ENCODE measurements at regions of chr10 and their contacts with region 1.

Region 1: DNA sequence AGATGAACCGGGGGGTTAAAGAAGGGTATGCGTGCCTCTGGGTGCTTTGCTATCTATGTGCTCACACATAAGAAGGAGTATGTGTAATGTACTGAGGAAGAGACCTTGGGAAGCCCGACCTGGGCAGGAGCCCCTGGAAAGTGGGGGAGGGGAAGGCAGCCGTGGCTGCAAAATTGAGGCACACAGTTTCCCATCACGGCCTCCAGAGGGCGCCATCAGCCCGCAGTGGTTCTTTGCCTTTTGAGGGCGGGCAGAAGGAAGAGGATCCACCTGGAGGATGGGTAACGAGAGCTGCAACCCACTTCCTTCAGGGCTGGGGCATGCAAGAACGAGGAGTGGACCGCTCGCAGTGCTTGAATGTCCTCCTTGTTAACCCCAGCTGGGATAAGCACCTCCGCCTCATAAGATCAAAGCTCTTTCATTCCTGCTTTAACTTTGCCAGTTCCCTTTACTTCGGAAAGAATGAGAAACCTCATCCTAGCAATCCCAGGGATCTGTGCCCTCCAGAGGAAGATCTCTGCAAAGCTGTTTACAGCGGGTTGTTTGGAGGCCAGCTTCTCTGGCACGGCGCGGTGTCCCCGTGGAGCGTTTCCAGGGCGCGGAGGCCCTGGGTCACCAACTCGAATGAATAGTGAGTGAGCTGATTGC is 77.9 kb downstream of the PCGF5 start:
- DNase-seq: peak; percentile 40 to 72
- H3K4me3 ChIP-seq: peak overlapping the region; percentile 24; the same call in 1 of the 2 replicates
- H3K27ac ChIP-seq: no peak overlapping the region
- H3K4me1 ChIP-seq: 0 out of 2 replicates have a peak, but pooled peaks cover 7% of the 10 kb centered on the region
- H3K27me3 ChIP-seq: no peaks in the 10 kb centered on the region
- CTCF ChIP-seq: peak; percentile 83

Region 2: DNA sequence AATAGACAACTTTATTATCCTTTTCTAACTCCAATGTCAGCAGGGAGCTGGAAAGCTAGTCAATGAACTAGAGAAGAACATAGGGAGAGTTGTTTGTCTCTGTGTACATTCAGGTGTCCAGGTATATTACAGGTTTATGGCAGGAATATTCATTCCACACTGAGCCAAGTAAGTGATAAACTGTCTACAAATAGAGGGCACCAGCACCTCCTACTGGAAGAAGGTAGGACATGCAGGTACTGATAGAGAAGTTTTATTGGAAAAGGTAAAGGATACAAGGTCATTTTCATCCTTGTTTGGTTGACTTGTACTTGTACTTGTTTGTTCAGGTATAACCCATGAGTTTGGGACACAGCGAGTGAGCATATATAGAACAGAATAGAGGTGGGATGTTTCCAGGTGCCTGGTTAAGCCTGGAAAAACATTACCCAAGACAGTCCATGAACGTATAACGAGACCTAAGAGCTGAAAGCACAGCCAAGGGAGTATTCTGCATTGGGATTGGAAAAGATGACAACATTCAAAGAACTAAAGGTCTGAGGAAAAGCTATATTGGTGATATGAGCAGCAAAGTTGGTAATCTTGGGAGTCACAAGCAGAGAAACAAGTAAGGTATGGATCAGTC is 395.9 kb after region 1 on chr10:
- CTCF ChIA-PET with region 1: no interaction called
- POLR2A ChIA-PET with region 1: no interaction called
- intact Hi-C with region 1: loop called (anchors 1 kb)
- DNase-seq: no peak
- H3K4me3 ChIP-seq: no peak overlapping the region
- H3K27ac ChIP-seq: no peak overlapping the region
- H3K4me1 ChIP-seq: no peaks in the 10 kb centered on the region
- H3K27me3 ChIP-seq: no peaks in the 10 kb centered on the region
- CTCF ChIP-seq: peak; percentile 73

Region 3: GRCh38 chr10:91745074-91745832 is 446.9 kb after region 1 on chr10:
- CTCF ChIA-PET with region 1: no interaction called
- POLR2A ChIA-PET with region 1: no interaction called
- intact Hi-C with region 1: loop called (anchors 2 kb)
- DNase-seq: peak in 1 of 2 experiments; percentile 23
- H3K4me3 ChIP-seq: no peak overlapping the region
- H3K27ac ChIP-seq: no peak overlapping the region
- H3K4me1 ChIP-seq: no peaks in the 10 kb centered on the region
- H3K27me3 ChIP-seq: no peaks in the 10 kb centered on the region
- CTCF ChIP-seq: no peak

Measured in PC-9 (cell line).